ENCODE measurements at regions of chr1 and their contacts with region 1.

Region 1: GRCh38 chr1:117674521-117675397 is 68.9 kb downstream of the TENT5C start:
- DNase-seq: peak; percentile 43
- ATAC-seq: peak; percentile 58
- H3K4me3 ChIP-seq: no peak overlapping the region
- H3K27ac ChIP-seq: no peak overlapping the region
- H3K4me1 ChIP-seq: peaks cover 15% of the 10 kb centered on the region
- H3K27me3 ChIP-seq: no peaks in the 10 kb centered on the region
- CTCF ChIP-seq: peak; percentile 53

Region 2: GRCh38 chr1:117512743-117513321 is 161.9 kb before region 1 on chr1:
- CTCF ChIA-PET with region 1: interaction called, 3 read pairs
- POLR2A ChIA-PET with region 1: no interaction called
- intact Hi-C with region 1: loop called (anchors 5 kb)
- DNase-seq: peak; percentile 63
- ATAC-seq: peak; percentile 69
- H3K4me3 ChIP-seq: no peak overlapping the region
- H3K27ac ChIP-seq: no peak overlapping the region
- H3K4me1 ChIP-seq: no peaks in the 10 kb centered on the region
- H3K27me3 ChIP-seq: no peaks in the 10 kb centered on the region
- CTCF ChIP-seq: peak; percentile 83

Region 3: DNA sequence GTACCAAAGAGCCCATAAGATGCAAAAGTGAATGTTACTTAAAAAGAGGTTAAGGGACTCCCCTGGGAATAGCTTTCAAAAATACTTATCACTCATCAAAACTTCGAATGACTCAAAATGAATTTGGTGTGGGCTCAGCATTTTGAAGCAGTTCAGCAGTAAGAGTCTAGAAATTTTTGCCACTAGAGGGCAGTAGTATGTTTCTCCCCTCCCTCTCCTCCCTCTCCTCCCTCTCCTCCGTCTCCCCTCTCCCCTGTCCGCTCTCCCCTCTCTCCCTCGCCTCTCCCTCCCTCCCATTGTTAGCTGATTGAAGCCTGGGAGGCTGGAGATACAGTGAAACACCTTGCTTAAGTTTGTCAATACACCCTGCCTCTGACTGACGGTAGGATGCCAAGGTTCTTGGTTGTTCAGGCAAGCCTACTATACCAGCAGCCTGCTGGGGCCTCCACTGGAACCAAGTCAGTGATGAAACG is 139.7 kb before region 1 on chr1:
- CTCF ChIA-PET with region 1: interaction called, 3 read pairs
- POLR2A ChIA-PET with region 1: no interaction called
- intact Hi-C with region 1: loop called (anchors 5 kb)
- DNase-seq: peak; percentile 83
- ATAC-seq: peak; percentile 82
- H3K4me3 ChIP-seq: no peak overlapping the region
- H3K27ac ChIP-seq: no peak overlapping the region
- H3K4me1 ChIP-seq: peaks cover 20% of the 10 kb centered on the region
- H3K27me3 ChIP-seq: no peaks in the 10 kb centered on the region
- CTCF ChIP-seq: peak; percentile 82

Region 4: GRCh38 chr1:117573386-117574023 is 101.3 kb before region 1 on chr1:
- CTCF ChIA-PET with region 1: no interaction called
- POLR2A ChIA-PET with region 1: no interaction called
- intact Hi-C with region 1: no loop called
- DNase-seq: peak; percentile 14
- ATAC-seq: peak; percentile 42; the same call in 1 of the 2 replicates
- H3K4me3 ChIP-seq: no peak overlapping the region
- H3K27ac ChIP-seq: no peak overlapping the region
- H3K4me1 ChIP-seq: peaks cover 22% of the 10 kb centered on the region
- H3K27me3 ChIP-seq: no peaks in the 10 kb centered on the region
- CTCF ChIP-seq: no peak

Region 5: DNA sequence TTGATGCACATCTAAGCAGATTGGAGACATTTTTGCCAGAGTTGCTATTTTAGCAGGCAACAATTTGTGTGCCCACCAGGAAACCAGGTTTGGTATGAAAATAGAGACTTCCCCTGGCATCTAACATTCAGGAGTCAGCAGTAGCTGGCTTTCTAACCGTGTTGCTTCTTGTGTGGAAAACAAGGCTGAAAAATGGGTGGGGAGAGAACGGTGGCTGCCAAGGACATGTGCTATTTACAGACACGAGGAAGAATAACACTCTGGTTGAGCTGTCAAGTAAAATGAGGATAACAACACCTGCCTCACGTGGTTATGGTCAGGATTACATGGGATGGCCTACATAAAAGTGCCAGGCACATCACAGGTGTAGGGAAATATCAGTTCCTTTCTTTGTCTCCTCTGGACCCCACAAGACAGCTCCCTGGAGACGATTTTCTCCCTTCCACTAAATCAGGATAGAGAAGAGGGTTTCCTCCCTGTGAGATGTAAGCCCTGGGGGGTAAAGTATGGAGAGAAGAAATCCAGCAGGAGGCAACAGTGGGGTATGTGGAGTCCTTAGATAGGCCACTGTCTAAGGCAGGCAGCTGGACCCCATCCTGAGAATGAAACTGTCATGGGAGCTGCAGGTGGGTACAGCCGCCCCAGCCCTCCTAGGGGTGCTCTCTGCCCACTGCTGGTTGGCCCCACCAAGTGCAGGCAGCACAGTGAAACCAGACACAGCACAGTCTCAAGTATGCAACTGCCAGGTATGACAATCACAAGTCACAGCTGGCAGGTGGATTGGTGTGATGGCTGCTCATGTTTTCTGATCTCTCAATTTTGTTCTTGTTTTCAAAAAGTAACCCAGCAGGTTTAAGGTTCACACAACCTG is 11.4 kb after region 1 on chr1:
- CTCF ChIA-PET with region 1: no interaction called
- POLR2A ChIA-PET with region 1: no interaction called
- intact Hi-C with region 1: no loop called
- DNase-seq: no peak
- ATAC-seq: no peak
- H3K4me3 ChIP-seq: no peak overlapping the region
- H3K27ac ChIP-seq: no peak overlapping the region
- H3K4me1 ChIP-seq: no peaks in the 10 kb centered on the region
- H3K27me3 ChIP-seq: peaks cover 24% of the 10 kb centered on the region
- CTCF ChIP-seq: no peak

Measured in PC-3 (cell line).